ENCODE measurements at regions of chrX and their contacts with region 1.

Region 1: DNA sequence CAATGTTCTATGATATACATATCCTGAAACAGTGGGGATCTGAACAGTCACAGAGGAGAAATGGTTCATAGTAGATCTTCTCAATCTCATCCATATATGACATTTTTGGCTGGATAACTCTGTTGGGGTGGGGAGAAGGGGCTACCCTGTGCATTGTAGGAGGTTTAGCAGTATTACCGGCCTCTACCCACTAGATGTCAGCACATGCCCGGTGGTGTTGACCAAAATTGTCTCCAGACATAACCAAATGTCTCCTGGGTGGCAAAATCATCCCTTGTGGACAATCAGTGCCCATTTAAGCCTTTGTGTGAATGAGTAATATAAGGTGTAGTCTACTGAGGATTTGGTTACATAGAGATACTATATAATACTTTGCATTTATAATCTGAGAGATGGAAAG is 89.9 kb downstream of the PLS3 start:
- DNase-seq: peak; percentile 23
- ATAC-seq: peak; percentile 85
- H3K4me3 ChIP-seq: no peak overlapping the region
- H3K27ac ChIP-seq: no peak overlapping the region
- H3K4me1 ChIP-seq: no peaks in the 10 kb centered on the region
- H3K27me3 ChIP-seq: no peaks in the 10 kb centered on the region
- CTCF ChIP-seq: peak in 2 of 3 experiments; percentile 55 to 64; a peak in 4 of 6 replicates
- POLR2A ChIP-seq: no peak
- RAD21 ChIP-seq: peak; percentile 63

Region 2: GRCh38 chrX:115330498-115331168 is 320.3 kb before region 1 on chrX:
- CTCF ChIA-PET with region 1: no interaction called
- POLR2A ChIA-PET with region 1: no interaction called
- RAD21 ChIA-PET with region 1: no interaction called
- intact Hi-C with region 1: loop called (anchors 2 kb)
- DNase-seq: peak; percentile 44
- ATAC-seq: peak; percentile 80
- H3K4me3 ChIP-seq: no peak overlapping the region
- H3K27ac ChIP-seq: no peak overlapping the region
- H3K4me1 ChIP-seq: no peaks in the 10 kb centered on the region; a peak in 1 of 4 replicates
- H3K27me3 ChIP-seq: no peaks in the 10 kb centered on the region
- CTCF ChIP-seq: peak; percentile 49 to 65 (median 62); a peak in 5 of 6 replicates
- POLR2A ChIP-seq: no peak
- RAD21 ChIP-seq: peak; percentile 80

Measured in HCT116 (cell line).